Heart right ventricle (tissue), 16 donors: ENCODE measurements at regions of chr2 and their contacts with region 1.

Region 1: GRCh38 chr2:190408538-190409271 is 550 bp downstream of the MFSD6 start:
- DNase-seq: peak; percentile 29 to 61
- ATAC-seq: peak; percentile 34 to 62 (median 58)
- H3K4me3 ChIP-seq: peak overlapping the region; percentile 60 to 97 (median 84)
- H3K27ac ChIP-seq: peak overlapping the region; percentile 81 to 95 (median 90)
- H3K4me1 ChIP-seq: peaks cover 0 to 50% (median 35%) of the 10 kb centered on the region in 9 donors
- H3K27me3 ChIP-seq: peaks cover 0 to 6% (median 0%) of the 10 kb centered on the region in 7 donors
- CTCF ChIP-seq: no peak

Region 2: GRCh38 chr2:190468814-190469569 is 60.3 kb after region 1 on chr2:
- intact Hi-C with region 1: loop called in 4 of 10 experiments (anchors 5 to 10 kb)
- DNase-seq: peak; percentile 52 to 91
- ATAC-seq: peak; percentile 82 to 93 (median 88)
- H3K4me3 ChIP-seq: peak overlapping the region in 3 of 10 donors; percentile 10 to 16 (median 12)
- H3K27ac ChIP-seq: peak overlapping the region; percentile 21 to 89 (median 82)
- H3K4me1 ChIP-seq: peaks cover 5 to 64% (median 40%) of the 10 kb centered on the region in 9 donors
- H3K27me3 ChIP-seq: no peaks in the 10 kb centered on the region
- CTCF ChIP-seq: no peak

Region 3: GRCh38 chr2:190486037-190486623 is 77.4 kb after region 1 on chr2:
- intact Hi-C with region 1: loop called in 1 of 10 experiments (anchors 5 kb)
- DNase-seq: no peak
- ATAC-seq: peak in 5 of 8 donors; percentile 42 to 52 (median 50)
- H3K4me3 ChIP-seq: no peak overlapping the region
- H3K27ac ChIP-seq: peak overlapping the region in 4 of 10 donors; percentile 8 to 38 (median 10)
- H3K4me1 ChIP-seq: peaks cover 0 to 40% (median 7%) of the 10 kb centered on the region in 9 donors
- H3K27me3 ChIP-seq: no peaks in the 10 kb centered on the region
- CTCF ChIP-seq: no peak

Region 4: GRCh38 chr2:190500054-190500502 is 91.4 kb after region 1 on chr2:
- intact Hi-C with region 1: loop called in 1 of 10 experiments (anchors 5 kb)
- DNase-seq: no peak
- ATAC-seq: peak in 1 of 8 donors; percentile 13
- H3K4me3 ChIP-seq: no peak overlapping the region
- H3K27ac ChIP-seq: peak overlapping the region in 1 of 10 donors; percentile 32
- H3K4me1 ChIP-seq: peaks cover 0 to 37% (median 0%) of the 10 kb centered on the region in 9 donors
- H3K27me3 ChIP-seq: no peaks in the 10 kb centered on the region
- CTCF ChIP-seq: no peak

Region 5: DNA sequence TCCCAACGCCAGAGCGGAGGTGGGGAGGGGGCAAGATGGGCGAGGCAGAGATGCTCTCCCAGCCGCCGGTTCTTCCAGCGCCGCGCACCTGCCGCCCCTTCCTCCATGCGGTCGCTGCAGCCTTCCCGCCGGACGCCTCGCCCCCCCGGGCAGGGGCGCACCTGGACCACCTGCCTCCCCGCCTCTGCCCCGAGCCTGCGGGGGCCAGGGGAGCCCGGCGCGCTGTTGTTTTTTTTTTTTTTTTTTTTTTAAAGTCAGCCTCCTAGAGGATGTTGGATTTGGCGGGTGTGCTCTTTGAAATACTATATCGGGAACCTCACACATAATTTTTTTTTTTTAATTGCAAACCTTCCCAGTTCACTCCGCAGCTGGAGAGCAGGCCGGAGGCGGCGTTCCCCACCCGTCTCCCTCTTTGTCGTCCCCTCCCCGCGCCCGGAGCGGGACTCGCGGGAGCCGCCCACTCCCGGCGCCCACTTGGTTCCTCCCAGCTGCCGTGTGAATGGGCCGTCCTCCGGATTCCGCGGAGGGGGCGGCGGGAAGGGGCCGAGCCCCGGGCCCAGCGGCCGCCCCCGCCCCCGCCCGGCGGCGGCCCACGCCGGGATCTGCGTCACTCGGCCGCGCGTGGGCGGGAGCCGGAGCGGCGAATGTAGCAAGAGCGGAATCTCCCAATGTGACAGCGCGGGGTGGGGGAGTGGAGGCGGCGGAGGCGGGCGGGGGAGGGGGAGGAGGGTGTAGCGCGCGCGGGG is 239.8 kb after region 1 on chr2:
- intact Hi-C with region 1: loop called in 3 of 10 experiments (anchors 10 kb)
- DNase-seq: peak; percentile 91 to 94
- ATAC-seq: peak; percentile 93 to 97 (median 96)
- H3K4me3 ChIP-seq: peak overlapping the region; percentile 79 to 95 (median 90)
- H3K27ac ChIP-seq: peak overlapping the region; percentile 71 to 99 (median 96)
- H3K4me1 ChIP-seq: peaks cover 0 to 74% (median 32%) of the 10 kb centered on the region in 9 donors
- H3K27me3 ChIP-seq: no peaks in the 10 kb centered on the region
- CTCF ChIP-seq: no peak

Region 6: GRCh38 chr2:190679813-190680591 is 271.3 kb after region 1 on chr2:
- intact Hi-C with region 1: loop called in 1 of 10 experiments (anchors 10 kb)
- DNase-seq: peak in 1 of 2 donors; percentile 38
- ATAC-seq: peak in 6 of 8 donors; percentile 38 to 74 (median 56)
- H3K4me3 ChIP-seq: no peak overlapping the region
- H3K27ac ChIP-seq: no peak overlapping the region
- H3K4me1 ChIP-seq: peaks cover 0 to 96% (median 25%) of the 10 kb centered on the region in 9 donors
- H3K27me3 ChIP-seq: no peaks in the 10 kb centered on the region
- CTCF ChIP-seq: peak; percentile 15 to 64 (median 51)